ENCODE measurements at regions of chr1 and their contacts with region 1.

Region 1: GRCh38 chr1:59570524-59570923 is 244.2 kb upstream of the HOOK1 start:
- DNase-seq: no peak
- ATAC-seq: peak; percentile 66
- H3K4me3 Mint-ChIP-seq: peak overlapping the region; percentile 13
- H3K27ac Mint-ChIP-seq: peak overlapping the region; percentile 12
- H3K4me1 Mint-ChIP-seq: peaks cover 29% of the 10 kb centered on the region
- H3K27me3 Mint-ChIP-seq: no peaks in the 10 kb centered on the region
- CTCF ChIP-seq: no peak

Region 2: GRCh38 chr1:59692591-59692990 is 122.1 kb after region 1 on chr1:
- CTCF ChIA-PET with region 1: interaction called, 3 read pairs
- POLR2A ChIA-PET with region 1: no interaction called
- intact Hi-C with region 1: loop called (anchors 5 kb)
- DNase-seq: no peak
- ATAC-seq: peak; percentile 66
- H3K4me3 Mint-ChIP-seq: no peak overlapping the region
- H3K27ac Mint-ChIP-seq: peak overlapping the region; percentile 22
- H3K4me1 Mint-ChIP-seq: peaks cover 27% of the 10 kb centered on the region
- H3K27me3 Mint-ChIP-seq: no peaks in the 10 kb centered on the region
- CTCF ChIP-seq: no peak